ENCODE measurements at regions of chr1 and their contacts with region 1.

Region 1: DNA sequence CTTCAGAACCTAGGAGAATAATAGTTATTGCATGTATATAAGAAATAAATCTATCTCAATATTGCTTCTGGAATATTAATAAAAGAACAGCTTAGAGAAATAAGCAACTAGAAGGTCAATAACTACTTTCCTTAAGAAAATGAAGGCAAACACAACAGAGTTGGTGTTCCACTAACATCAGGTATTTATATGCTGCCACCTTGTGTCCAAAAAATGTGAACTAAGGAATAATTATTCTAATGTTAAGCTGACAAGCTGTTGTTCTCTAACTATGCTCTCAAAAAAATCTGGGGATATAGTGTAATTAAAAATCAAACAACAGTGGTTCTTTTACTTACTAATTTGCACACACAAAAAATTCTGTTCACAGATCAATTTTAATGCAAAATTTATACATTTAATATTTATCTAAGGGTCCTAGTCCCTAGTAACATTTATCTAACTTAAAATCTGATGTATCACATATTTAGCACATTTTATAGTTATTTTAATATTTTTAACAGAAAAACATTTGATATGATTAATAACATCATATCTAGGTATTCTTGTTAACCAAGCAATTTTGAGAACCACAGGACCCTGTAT is 39.6 kb downstream of the UCHL5 start:
- DNase-seq: peak in 1 of 2 donors; percentile 8
- ATAC-seq: peak in 4 of 8 donors; percentile 42 to 63 (median 54)
- H3K4me3 ChIP-seq: no peak overlapping the region
- H3K27ac ChIP-seq: no peak overlapping the region
- H3K4me1 ChIP-seq: peaks cover 0 to 2% (median 0%) of the 10 kb centered on the region in 9 donors
- H3K27me3 ChIP-seq: no peaks in the 10 kb centered on the region
- CTCF ChIP-seq: peak; percentile 26 to 74 (median 60)

Region 2: GRCh38 chr1:192477630-192478029 is 541.9 kb before region 1 on chr1:
- intact Hi-C with region 1: loop called in 9 of 10 experiments (anchors 2 to 10 kb)
- DNase-seq: no peak
- ATAC-seq: peak in 7 of 8 donors; percentile 39 to 81 (median 76)
- H3K4me3 ChIP-seq: no peak overlapping the region
- H3K27ac ChIP-seq: peak overlapping the region in 1 of 10 donors; percentile 8
- H3K4me1 ChIP-seq: peaks cover 0 to 14% (median 0%) of the 10 kb centered on the region in 9 donors
- H3K27me3 ChIP-seq: peaks cover 0 to 11% (median 0%) of the 10 kb centered on the region in 7 donors
- CTCF ChIP-seq: peak in 8 of 9 donors; percentile 26 to 73 (median 63)

Region 3: GRCh38 chr1:192592981-192593708 is 426.4 kb before region 1 on chr1:
- intact Hi-C with region 1: loop called in 1 of 10 experiments (anchors 10 kb)
- DNase-seq: no peak
- ATAC-seq: no peak
- H3K4me3 ChIP-seq: no peak overlapping the region
- H3K27ac ChIP-seq: no peak overlapping the region
- H3K4me1 ChIP-seq: no peaks in the 10 kb centered on the region
- H3K27me3 ChIP-seq: no peaks in the 10 kb centered on the region
- CTCF ChIP-seq: no peak

Region 4: GRCh38 chr1:192609110-192610079 is 410.1 kb before region 1 on chr1:
- intact Hi-C with region 1: loop called in 2 of 10 experiments (anchors 10 kb)
- DNase-seq: peak; percentile 9 to 17
- ATAC-seq: peak in 7 of 8 donors; percentile 26 to 89 (median 52)
- H3K4me3 ChIP-seq: no peak overlapping the region
- H3K27ac ChIP-seq: no peak overlapping the region
- H3K4me1 ChIP-seq: peaks cover 0 to 22% (median 0%) of the 10 kb centered on the region in 9 donors
- H3K27me3 ChIP-seq: no peaks in the 10 kb centered on the region
- CTCF ChIP-seq: no peak

Region 5: GRCh38 chr1:192639607-192640368 is 379.7 kb before region 1 on chr1:
- intact Hi-C with region 1: loop called in 2 of 10 experiments (anchors 10 kb)
- DNase-seq: no peak
- ATAC-seq: peak in 1 of 8 donors; percentile 18
- H3K4me3 ChIP-seq: no peak overlapping the region
- H3K27ac ChIP-seq: no peak overlapping the region
- H3K4me1 ChIP-seq: peaks cover 0 to 8% (median 0%) of the 10 kb centered on the region in 9 donors
- H3K27me3 ChIP-seq: no peaks in the 10 kb centered on the region
- CTCF ChIP-seq: no peak

Region 6: DNA sequence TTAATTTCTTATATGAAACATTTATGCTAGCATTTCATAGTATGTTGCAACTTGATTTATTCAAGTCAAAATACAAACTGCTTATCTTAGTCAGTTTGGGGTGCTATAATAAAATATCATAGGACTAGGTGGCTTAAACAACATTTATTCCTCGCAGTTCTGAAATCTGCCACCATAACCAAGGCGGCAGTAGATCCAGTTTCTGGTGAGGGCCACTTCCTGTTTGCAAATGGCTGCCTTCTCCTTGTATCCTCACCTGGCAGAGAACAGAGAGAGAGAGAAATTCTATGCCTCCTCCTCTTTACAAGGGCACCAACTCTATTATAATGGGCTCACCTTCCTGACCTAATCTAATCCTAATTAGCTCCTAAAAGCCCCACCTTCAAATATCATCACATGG is 286.7 kb before region 1 on chr1:
- intact Hi-C with region 1: no loop called
- DNase-seq: no peak
- ATAC-seq: no peak
- H3K4me3 ChIP-seq: no peak overlapping the region
- H3K27ac ChIP-seq: no peak overlapping the region
- H3K4me1 ChIP-seq: peaks cover 0 to 21% (median 12%) of the 10 kb centered on the region in 9 donors
- H3K27me3 ChIP-seq: no peaks in the 10 kb centered on the region
- CTCF ChIP-seq: no peak

Region 7: GRCh38 chr1:192801451-192801850 is 218.1 kb before region 1 on chr1:
- intact Hi-C with region 1: loop called in 7 of 10 experiments (anchors 2 to 10 kb)
- DNase-seq: no peak
- ATAC-seq: no peak
- H3K4me3 ChIP-seq: no peak overlapping the region
- H3K27ac ChIP-seq: no peak overlapping the region
- H3K4me1 ChIP-seq: peaks cover 0 to 10% (median 0%) of the 10 kb centered on the region in 9 donors
- H3K27me3 ChIP-seq: no peaks in the 10 kb centered on the region
- CTCF ChIP-seq: no peak

Measured in heart right ventricle (tissue), 16 donors.